ENCODE measurements at regions of chr3 and their contacts with region 1.

Region 1: DNA sequence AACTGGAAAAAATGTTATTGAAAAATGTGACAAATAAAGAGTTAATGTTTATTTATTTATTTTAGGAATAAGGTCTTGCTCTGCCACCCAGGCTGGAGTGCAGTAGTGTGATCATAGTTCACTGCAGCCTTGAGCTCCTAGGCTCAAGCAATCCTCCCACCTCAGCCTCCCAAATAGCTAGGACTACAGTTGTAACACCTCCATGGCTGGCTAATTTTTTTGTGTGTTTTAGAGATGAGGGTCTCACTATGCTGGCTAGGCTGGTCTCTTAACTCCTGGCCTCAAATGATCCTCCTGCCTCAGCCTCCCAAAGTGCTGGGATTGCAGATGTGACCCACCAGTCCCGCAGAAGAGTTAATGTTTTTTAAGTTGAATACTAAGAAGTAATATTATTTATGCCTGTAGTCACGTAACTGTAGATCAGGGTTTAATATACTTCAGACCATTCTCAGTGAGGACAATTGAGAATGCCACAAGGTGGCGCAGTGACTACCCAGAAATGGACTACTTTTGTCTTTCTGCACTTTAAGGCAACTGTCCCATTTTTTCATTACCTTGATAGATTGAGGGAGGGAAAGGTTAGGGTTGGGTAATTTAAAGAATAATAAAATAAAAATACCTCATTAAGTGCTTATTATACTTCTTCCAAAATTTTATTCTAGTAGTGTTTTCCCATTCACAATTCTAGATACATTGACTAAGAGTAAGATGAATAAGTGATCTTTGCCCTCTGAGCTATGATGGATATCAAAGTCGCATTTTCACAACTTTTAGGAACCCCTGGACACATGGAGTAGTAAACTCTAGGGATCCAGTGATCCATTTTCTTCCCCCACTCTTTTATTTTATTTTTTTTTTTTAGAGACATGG is 6.0 kb downstream of the MUC13 start:
- DNase-seq: peak; percentile 79
- H3K4me3 ChIP-seq: no peak overlapping the region
- H3K27ac ChIP-seq: no peak overlapping the region
- H3K4me1 ChIP-seq: peaks cover 6% of the 10 kb centered on the region
- H3K27me3 ChIP-seq: no peaks in the 10 kb centered on the region
- CTCF ChIP-seq: peak; percentile 88

Region 2: GRCh38 chr3:125437631-125438435 is 509.3 kb after region 1 on chr3:
- CTCF ChIA-PET with region 1: no interaction called
- POLR2A ChIA-PET with region 1: no interaction called
- intact Hi-C with region 1: loop called (anchors 2 kb)
- DNase-seq: peak; percentile 53
- H3K4me3 ChIP-seq: no peak overlapping the region
- H3K27ac ChIP-seq: no peak overlapping the region
- H3K4me1 ChIP-seq: no peaks in the 10 kb centered on the region
- H3K27me3 ChIP-seq: no peaks in the 10 kb centered on the region
- CTCF ChIP-seq: peak; percentile 97

Region 3: DNA sequence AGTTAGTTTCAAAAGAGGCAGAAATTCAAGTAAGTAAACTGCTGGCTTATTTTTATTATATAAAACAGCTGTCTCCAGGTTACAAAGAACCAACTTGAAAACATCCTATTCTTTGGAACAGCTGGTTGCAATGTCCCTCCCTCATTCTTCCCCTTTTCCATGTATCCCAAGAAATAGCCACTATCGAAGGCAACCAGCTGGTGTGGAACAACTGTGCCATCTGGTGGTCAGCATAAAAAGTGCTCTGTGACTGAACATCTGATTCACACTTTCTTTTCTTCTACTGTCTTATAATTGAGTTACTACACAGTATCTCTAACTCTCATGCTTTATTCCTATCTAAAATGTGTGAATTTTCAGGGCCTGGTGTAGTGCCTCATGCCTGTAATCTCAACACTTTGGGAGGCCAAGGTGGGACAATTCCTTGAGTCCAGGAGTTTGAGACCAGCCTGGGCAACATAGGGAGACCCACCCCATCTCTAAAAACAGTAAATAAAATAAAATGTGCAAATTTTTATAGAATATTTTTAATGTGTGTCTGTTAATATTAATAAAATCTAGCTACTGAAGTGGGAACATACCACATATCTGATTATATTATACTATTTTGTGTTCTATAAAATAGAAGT is 657.1 kb after region 1 on chr3:
- CTCF ChIA-PET with region 1: no interaction called
- POLR2A ChIA-PET with region 1: no interaction called
- intact Hi-C with region 1: loop called (anchors 2 kb)
- DNase-seq: peak; percentile 72
- H3K4me3 ChIP-seq: no peak overlapping the region
- H3K27ac ChIP-seq: no peak overlapping the region
- H3K4me1 ChIP-seq: peaks cover 23% of the 10 kb centered on the region
- H3K27me3 ChIP-seq: no peaks in the 10 kb centered on the region
- CTCF ChIP-seq: peak; percentile 94

Measured in A673 (cell line).